ENCODE measurements at regions of chr7 and their contacts with region 1.

Region 1: DNA sequence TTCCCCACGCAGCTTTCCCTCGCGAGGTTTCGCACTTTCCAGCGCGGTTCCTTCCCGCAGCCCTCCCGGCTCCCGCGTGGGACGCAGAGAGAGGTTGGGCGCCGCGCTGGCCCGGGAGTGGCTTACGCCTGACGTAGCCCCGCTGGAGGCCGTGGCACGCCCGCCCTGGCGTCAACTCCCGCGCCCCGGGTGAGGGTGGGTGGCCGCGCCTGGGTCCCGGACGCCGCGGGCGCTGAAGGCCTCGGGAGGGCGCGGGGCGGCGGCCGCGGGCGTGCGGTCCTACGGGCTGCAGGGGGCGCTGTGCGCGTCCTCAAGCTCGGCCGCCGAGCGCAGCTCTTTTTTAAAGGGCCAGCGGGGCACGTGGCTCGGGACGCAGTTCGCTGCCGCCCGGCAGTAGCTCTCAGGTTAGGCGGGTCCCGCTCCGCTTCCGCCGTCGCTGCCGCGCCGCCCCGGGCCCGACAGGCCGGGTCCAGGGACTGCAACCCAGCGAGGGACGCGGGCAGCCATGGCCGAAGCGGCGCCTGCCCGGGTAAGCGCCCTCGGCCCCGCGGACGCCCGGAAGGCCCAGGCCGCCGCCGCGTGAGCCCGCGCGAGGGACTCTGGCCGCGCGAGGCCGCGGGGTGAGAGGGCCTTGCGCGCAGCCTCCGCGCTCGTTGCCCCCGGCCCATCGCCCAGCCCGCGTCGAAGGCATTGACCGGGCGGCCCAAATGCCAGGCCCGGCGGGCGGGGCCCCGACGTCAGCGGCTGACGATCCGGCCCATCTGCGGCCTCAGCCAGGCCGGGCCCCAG is at the start of gene ZNF783:
- DNase-seq: peak; percentile 75 to 91 (median 87)
- H3K4me3 ChIP-seq: peak within 1 kb of the TSS; percentile 75
- H3K4me3 Mint-ChIP-seq: peak within 1 kb of the TSS; percentile 84 to 89 (median 87)
- H3K27ac ChIP-seq: peak within 1 kb of the TSS; percentile 50
- H3K27ac Mint-ChIP-seq: peak within 1 kb of the TSS; percentile 87 to 97 (median 93)
- H3K4me1 ChIP-seq: peaks cover 24% of the 10 kb centered on the region
- H3K4me1 Mint-ChIP-seq: peaks cover 27 to 52% (median 36%) of the 10 kb centered on the region in 3 donors
- H3K27me3 ChIP-seq: no peaks in the 10 kb centered on the region
- H3K27me3 Mint-ChIP-seq: no peaks in the 10 kb centered on the region
- total RNA-seq, gene ZNF783: 19.7 to 20.4 TPM

Region 2: GRCh38 chr7:149239345-149240191 is 22.5 kb before region 1 on chr7 and contains the start of gene ZNF212:
- CTCF ChIA-PET with region 1: interaction called, 14 read pairs
- POLR2A ChIA-PET with region 1: no interaction called
- DNase-seq: peak; percentile 79 to 90 (median 82)
- H3K4me3 ChIP-seq: peak within 1 kb of the TSS; percentile 98
- H3K4me3 Mint-ChIP-seq: peak within 1 kb of the TSS; percentile 89 to 98 (median 92)
- H3K27ac ChIP-seq: peak within 1 kb of the TSS; percentile 84
- H3K27ac Mint-ChIP-seq: peak within 1 kb of the TSS; percentile 76 to 98 (median 86)
- H3K4me1 ChIP-seq: peaks cover 22% of the 10 kb centered on the region
- H3K4me1 Mint-ChIP-seq: peaks cover 28 to 39% (median 34%) of the 10 kb centered on the region in 3 donors
- H3K27me3 ChIP-seq: no peaks in the 10 kb centered on the region
- H3K27me3 Mint-ChIP-seq: peaks cover 6 to 12% of the 10 kb centered on the region in 2 donors
- total RNA-seq, gene ZNF212: 14.7 to 16.6 TPM

Region 3: DNA sequence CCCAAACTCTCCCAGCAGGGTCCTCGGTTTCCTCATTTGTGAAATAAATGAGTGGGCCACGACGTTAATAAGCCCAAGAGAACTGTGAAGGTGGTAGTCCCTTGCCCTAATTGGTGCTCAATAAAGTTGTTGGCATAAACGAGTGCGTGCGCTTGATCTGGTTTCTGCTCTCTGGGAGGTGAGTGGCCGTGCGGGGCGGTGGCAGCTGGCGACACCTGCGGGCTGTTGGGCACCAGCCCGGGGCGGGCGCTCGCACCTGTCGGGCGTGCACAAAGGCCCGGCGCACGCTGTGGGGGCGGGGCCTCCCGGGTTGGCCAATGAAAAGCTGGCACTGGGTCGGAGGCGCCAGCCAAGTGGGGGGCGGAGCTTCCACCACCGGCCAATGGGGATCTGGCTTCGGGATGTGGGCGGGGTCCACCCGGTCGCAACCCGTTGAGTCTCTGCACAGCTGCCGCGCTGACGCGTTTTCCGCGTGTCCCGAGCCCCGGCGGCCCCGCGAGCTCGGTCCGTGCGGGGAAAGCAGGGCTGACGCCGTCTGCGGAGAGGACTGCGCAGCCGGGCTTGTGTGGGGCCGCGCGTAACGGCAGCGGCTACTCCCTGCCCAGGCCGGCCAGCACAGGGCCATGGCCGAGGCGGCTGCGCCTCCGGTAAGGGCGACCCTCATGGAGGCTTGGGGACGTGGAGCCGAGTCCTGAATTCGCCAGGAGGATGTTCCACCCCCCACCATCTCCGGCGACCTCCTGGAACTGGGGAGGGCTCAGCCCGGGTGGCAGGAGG is 23.0 kb after region 1 on chr7:
- CTCF ChIA-PET with region 1: interaction called, 46 read pairs
- POLR2A ChIA-PET with region 1: interaction called, 26 read pairs
- DNase-seq: peak; percentile 97 to 99 (median 98)
- H3K4me3 ChIP-seq: peak overlapping the region; percentile 62
- H3K4me3 Mint-ChIP-seq: peak overlapping the region; percentile 84 to 93 (median 87)
- H3K27ac ChIP-seq: peak overlapping the region; percentile 38
- H3K27ac Mint-ChIP-seq: peak overlapping the region; percentile 54 to 92 (median 86)
- H3K4me1 ChIP-seq: peaks cover 34% of the 10 kb centered on the region
- H3K4me1 Mint-ChIP-seq: peaks cover 37 to 52% (median 41%) of the 10 kb centered on the region in 3 donors
- H3K27me3 ChIP-seq: no peaks in the 10 kb centered on the region
- H3K27me3 Mint-ChIP-seq: no peaks in the 10 kb centered on the region

Region 4: DNA sequence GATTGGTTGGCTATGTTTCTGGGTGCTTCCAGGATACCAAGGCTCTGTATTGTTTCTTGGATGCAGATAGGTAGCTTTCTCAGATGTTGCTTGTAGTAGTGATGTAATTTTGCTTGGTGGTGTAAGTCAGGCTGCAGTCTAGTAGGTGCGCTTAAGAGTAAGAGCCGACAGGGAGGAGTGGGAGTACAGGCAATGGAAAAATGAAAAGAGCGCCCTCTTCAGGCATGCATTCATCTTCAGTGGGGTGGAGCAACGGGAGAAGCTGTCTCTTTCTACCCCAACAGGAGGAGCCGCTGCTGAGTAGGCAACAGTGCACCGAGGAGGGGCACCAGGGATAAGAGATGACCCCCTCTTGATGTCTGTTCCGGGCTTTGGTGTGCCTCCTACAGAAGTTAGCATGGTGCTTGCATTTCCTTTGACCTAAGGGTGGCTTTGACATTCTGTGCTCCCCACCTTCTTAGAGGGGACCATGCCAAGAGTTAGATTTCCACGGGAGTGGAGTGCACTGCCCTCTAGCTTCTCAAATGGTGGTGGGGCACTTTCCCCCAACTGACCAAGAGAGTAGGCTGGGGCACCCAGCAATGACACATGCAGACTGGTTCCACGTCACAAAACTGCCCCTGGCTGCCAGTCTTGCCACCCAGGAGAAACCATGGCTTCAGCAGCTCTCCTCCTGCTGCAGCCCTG is 56.1 kb after region 1 on chr7:
- CTCF ChIA-PET with region 1: no interaction called
- POLR2A ChIA-PET with region 1: no interaction called
- DNase-seq: no peak
- H3K4me3 ChIP-seq: no peak overlapping the region
- H3K4me3 Mint-ChIP-seq: no peak overlapping the region
- H3K27ac ChIP-seq: no peak overlapping the region
- H3K27ac Mint-ChIP-seq: no peak overlapping the region
- H3K4me1 ChIP-seq: no peaks in the 10 kb centered on the region
- H3K4me1 Mint-ChIP-seq: peaks cover 9 to 14% (median 13%) of the 10 kb centered on the region in 3 donors
- H3K27me3 ChIP-seq: peaks cover 7% of the 10 kb centered on the region
- H3K27me3 Mint-ChIP-seq: peaks cover 9 to 38% of the 10 kb centered on the region in 2 donors

Region 5: GRCh38 chr7:149422129-149422913 is 160.3 kb after region 1 on chr7:
- CTCF ChIA-PET with region 1: interaction called, 13 read pairs
- POLR2A ChIA-PET with region 1: interaction called, 7 read pairs
- DNase-seq: peak; percentile 58 to 79 (median 76)
- H3K4me3 ChIP-seq: peak overlapping the region; percentile 62
- H3K4me3 Mint-ChIP-seq: peak overlapping the region; percentile 72 to 92 (median 79)
- H3K27ac ChIP-seq: peak overlapping the region; percentile 60
- H3K27ac Mint-ChIP-seq: peak overlapping the region; percentile 56 to 93 (median 78)
- H3K4me1 ChIP-seq: peaks cover 5% of the 10 kb centered on the region
- H3K4me1 Mint-ChIP-seq: peaks cover 0 to 12% (median 5%) of the 10 kb centered on the region in 3 donors
- H3K27me3 ChIP-seq: no peaks in the 10 kb centered on the region
- H3K27me3 Mint-ChIP-seq: no peaks in the 10 kb centered on the region